Activated T-helper 2 cell treated with anti-CD3 and anti-CD28 coated beads, Interferon-gamma antibody, Interleukin-2, Interleukin-4, amounts not matched to agents 10 μg/mL and 5 μg/mL and 100 μg/mL, durations not matched to agents 14 hours and 24 hours and 36 hours (primary cell): ENCODE measurements at regions of chr2 and their contacts with region 1.

Region 1: DNA sequence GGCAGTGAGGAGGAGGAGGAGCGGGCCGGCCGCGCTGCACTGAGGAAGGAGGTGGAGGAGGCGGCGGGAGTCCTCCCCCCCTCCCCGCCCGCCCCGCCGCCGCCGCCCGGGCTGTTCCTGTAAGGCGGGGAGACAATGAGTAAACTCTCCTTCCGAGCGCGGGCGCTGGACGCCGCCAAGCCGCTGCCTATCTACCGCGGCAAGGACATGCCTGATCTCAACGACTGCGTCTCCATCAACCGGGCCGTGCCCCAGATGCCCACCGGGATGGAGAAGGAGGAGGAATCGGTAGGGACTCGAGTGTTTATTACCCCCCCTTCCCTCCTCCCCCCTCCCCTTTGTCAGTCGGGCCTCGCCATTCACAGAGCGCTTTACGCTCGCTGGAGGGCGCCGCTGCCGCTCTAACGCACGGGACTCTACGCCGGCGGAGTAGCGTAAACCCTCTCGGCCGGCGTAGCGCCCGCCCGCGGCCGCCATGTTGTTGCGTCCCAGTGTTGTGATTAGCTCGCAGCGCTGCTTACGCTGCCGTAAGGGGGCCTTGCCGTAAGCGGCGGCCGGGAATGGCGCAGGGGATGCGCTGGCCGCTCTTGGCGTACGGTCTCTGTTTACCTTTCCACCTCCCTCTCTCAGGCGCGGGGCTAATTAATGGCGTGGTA is 460 bp downstream of the EPC2 start:
- DNase-seq: peak; percentile 89
- H3K4me3 Mint-ChIP-seq: peak overlapping the region; percentile 95
- H3K27ac Mint-ChIP-seq: peak overlapping the region; percentile 81
- H3K4me1 Mint-ChIP-seq: peaks cover 33% of the 10 kb centered on the region
- H3K27me3 Mint-ChIP-seq: peaks cover 6% of the 10 kb centered on the region

Region 2: GRCh38 chr2:147937744-147938349 is 707.2 kb before region 1 on chr2:
- intact Hi-C with region 1: loop called (anchors 5 kb)
- DNase-seq: no peak
- H3K4me3 Mint-ChIP-seq: no peak overlapping the region
- H3K27ac Mint-ChIP-seq: no peak overlapping the region
- H3K4me1 Mint-ChIP-seq: no peaks in the 10 kb centered on the region
- H3K27me3 Mint-ChIP-seq: no peaks in the 10 kb centered on the region

Region 3: GRCh38 chr2:148524519-148524919 is 120.5 kb before region 1 on chr2:
- intact Hi-C with region 1: loop called (anchors 1 kb)
- DNase-seq: peak; percentile 53
- H3K4me3 Mint-ChIP-seq: no peak overlapping the region
- H3K27ac Mint-ChIP-seq: peak overlapping the region; percentile 69
- H3K4me1 Mint-ChIP-seq: peaks cover 61% of the 10 kb centered on the region
- H3K27me3 Mint-ChIP-seq: no peaks in the 10 kb centered on the region

Region 4: GRCh38 chr2:148603562-148603920 is 41.5 kb before region 1 on chr2:
- intact Hi-C with region 1: loop called (anchors 1 kb)
- DNase-seq: peak; percentile 28
- H3K4me3 Mint-ChIP-seq: no peak overlapping the region
- H3K27ac Mint-ChIP-seq: peak overlapping the region; percentile 95
- H3K4me1 Mint-ChIP-seq: peaks cover 28% of the 10 kb centered on the region
- H3K27me3 Mint-ChIP-seq: peaks cover 4% of the 10 kb centered on the region

Region 5: DNA sequence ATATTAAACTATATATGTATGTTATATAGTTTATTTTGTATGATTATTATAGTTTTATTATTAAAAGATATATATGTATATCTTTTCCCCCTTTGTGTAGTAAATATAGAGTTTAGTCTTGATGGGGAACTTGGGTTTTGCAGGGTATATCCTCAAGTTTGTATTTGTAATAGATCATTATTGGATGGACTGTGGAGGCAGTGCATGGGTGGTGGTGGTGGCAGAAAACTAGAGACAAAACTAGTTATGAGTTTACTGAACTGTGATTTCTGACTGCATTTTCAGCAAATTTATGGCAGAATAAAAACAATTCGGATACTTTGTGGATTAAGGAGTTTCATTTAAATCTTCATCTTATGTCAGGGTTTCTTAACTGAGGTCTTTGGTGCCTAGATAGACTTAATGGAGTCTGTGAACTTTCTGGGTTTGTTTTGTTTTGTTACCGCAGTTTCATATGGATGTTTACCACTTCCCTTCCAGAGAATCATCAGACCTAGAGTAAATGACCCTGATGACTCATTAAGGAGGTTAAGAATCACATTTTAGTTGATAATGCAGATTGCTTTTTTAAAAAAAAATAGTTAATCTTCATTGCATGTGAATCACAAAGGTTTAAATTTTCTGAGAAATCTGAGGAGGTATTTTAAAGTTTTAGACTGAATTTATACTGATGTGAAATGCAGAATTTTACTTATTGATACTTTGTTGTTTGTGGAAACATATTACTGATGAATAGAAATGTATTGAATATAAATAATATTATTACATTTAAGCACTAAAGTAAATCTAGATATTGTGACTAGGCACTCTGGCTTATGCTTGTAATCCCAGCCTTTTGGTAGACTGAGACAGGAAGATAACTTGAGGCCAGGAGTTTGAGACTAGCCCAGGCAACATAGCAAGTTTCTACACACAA is 14.1 kb after region 1 on chr2:
- intact Hi-C with region 1: loop called (anchors 1 kb)
- DNase-seq: no peak
- H3K4me3 Mint-ChIP-seq: peak overlapping the region; percentile 40
- H3K27ac Mint-ChIP-seq: peak overlapping the region; percentile 70
- H3K4me1 Mint-ChIP-seq: peaks cover 60% of the 10 kb centered on the region
- H3K27me3 Mint-ChIP-seq: no peaks in the 10 kb centered on the region

Region 6: GRCh38 chr2:148874868-148875341 is 229.9 kb after region 1 on chr2 and contains the start of gene KIF5C:
- intact Hi-C with region 1: loop called (anchors 2 kb)
- DNase-seq: peak; percentile 73
- H3K4me3 Mint-ChIP-seq: peak within 1 kb of the TSS; percentile 84
- H3K27ac Mint-ChIP-seq: peak within 1 kb of the TSS; percentile 49
- H3K4me1 Mint-ChIP-seq: peaks cover 14% of the 10 kb centered on the region
- H3K27me3 Mint-ChIP-seq: peaks cover 21% of the 10 kb centered on the region
- total RNA-seq, gene KIF5C: 12.9 and 17.3 TPM in 2 replicates

Region 7: GRCh38 chr2:149068996-149069888 is 424.2 kb after region 1 on chr2:
- intact Hi-C with region 1: loop called (anchors 5 kb)
- DNase-seq: peak; percentile 43
- H3K4me3 Mint-ChIP-seq: peak overlapping the region; percentile 37
- H3K27ac Mint-ChIP-seq: peak overlapping the region; percentile 79
- H3K4me1 Mint-ChIP-seq: peaks cover 19% of the 10 kb centered on the region
- H3K27me3 Mint-ChIP-seq: peaks cover 27% of the 10 kb centered on the region